H1 (cell line): ENCODE measurements at regions of chr2 and their contacts with region 1.

Region 1: DNA sequence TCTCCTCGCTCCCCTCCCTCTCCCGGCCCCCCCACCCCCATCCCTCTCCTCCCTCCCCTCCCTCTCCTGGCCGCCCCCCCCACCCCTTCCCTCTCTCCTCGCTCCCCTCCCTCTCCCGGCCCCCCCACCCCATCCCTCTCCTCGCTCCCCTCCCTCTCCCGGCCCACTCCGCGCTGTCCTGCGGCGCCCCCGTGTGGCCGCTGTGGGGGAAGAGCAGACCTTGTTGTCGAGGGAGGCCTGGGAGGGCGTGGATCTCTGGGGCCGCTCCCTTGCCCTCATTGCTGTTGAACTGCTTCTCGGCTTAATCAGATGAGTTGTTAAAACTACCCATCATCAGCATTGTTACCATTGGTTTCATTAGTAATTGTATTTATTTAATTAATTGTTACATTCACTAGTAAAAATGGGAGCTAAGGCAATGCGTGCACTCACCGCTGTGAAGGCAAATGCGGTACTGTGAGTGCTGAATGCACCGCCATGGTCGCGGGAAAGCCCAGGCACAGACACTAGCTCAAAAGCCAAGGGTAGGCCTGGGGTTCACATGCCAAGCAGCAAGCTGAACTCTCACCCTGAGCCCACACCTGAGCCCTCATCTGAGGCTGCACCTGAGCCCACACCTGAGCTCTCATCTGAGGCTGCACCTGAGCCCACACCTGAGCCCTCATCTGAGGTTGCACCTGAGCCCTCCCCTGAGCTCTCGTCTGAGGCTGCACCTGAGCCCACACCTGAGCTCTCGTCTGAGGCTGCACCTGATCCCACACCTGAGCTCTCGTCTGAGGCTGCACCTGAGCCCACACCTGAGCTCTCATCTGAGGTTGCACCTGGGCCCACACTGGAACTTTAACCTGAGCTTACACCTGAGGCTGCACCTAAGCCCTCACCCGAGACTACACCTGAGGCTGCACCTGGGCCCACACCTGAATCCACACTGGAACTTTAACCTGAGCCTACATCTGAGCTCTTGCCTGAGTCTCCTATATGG is 8.8 kb downstream of the RTP5 start:
- DNase-seq: peak; percentile 25 to 87
- H3K4me3 ChIP-seq: no peak overlapping the region
- H3K27ac ChIP-seq: no peak overlapping the region
- H3K4me1 ChIP-seq: peaks cover 3 to 8% (median 7%) of the 10 kb centered on the region in 4 experiments; a peak in 6 of 7 replicates
- H3K27me3 ChIP-seq: no peaks in the 10 kb centered on the region
- CTCF ChIP-seq: peak in 2 of 3 experiments; percentile 61 to 82; a peak in 3 of 4 replicates
- EP300 ChIP-seq: no peak
- POLR2A ChIP-seq: no peak
- RAD21 ChIP-seq: peak; percentile 76 to 84

Region 2: DNA sequence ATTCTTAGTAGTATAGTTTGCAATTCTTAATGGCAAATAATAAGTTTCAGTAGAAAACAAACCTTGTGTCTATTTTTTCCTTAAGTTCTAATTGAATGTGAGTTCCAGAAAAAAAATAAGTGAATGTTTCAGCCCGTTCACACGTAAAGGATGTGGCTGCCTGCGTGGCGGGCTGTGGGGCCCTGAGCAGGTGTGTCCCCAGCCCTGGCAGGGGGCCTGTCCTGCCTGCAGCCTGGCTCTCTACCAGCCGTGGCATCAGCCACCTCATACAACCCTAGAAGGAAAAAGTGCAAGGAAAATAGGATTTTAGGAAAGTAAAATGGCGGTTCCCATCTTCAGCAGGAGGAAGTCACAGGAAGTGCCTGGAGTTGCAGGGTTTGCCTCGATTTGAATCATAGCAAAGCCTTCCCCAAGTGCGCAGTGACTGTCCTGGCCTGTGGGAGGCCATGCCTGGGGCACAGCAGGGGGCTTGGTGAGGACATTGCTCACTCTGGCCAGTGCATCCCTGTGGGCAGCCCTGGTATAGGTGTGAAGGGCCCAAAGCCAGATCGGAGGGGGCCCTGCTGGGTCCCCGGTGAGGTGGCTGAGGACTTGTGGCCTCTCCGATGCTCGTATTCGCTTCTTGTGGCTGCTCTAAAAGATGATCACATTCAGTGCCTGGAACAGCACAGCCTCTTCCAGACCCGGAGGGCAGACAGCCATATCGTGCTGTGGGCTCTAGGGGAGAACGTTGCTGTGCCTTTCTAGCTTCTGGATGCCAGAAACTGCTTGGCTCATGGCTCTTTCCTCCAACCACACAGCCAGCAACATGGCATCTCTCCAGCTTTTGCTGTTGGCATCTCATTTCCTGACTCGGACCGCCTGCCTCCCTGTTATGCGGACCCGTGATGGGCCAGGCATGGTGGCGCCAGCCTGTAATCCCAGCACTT is 204.2 kb before region 1 on chr2:
- CTCF ChIA-PET with region 1: interaction called, 11 read pairs
- POLR2A ChIA-PET with region 1: interaction called, 3 read pairs
- DNase-seq: peak in 1 of 2 experiments; percentile 63
- H3K4me3 ChIP-seq: no peak overlapping the region
- H3K27ac ChIP-seq: 0 out of 2 replicates have a peak overlapping the region, but pooled peaks have one; percentile 14
- H3K4me1 ChIP-seq: no peaks in the 10 kb centered on the region
- H3K27me3 ChIP-seq: no peaks in the 10 kb centered on the region
- CTCF ChIP-seq: peak in 2 of 3 experiments; percentile 26 to 34; a peak in 2 of 4 replicates
- EP300 ChIP-seq: no peak
- POLR2A ChIP-seq: no peak
- RAD21 ChIP-seq: no peak

Region 3: GRCh38 chr2:241734467-241735208 is 143.6 kb before region 1 on chr2 and contains the start of gene D2HGDH:
- CTCF ChIA-PET with region 1: interaction called, 26 read pairs
- POLR2A ChIA-PET with region 1: no interaction called
- DNase-seq: peak; percentile 50 to 98
- H3K4me3 ChIP-seq: peak within 1 kb of the TSS; percentile 71 to 94 (median 78)
- H3K27ac ChIP-seq: peak within 1 kb of the TSS; percentile 20; the same call in 1 of the 2 replicates
- H3K4me1 ChIP-seq: peaks cover 0 to 6% (median 0%) of the 10 kb centered on the region in 4 experiments; a peak in 2 of 7 replicates
- H3K27me3 ChIP-seq: peaks cover 0 to 4% (median 3%) of the 10 kb centered on the region in 4 experiments; a peak in 4 of 7 replicates
- CTCF ChIP-seq: no peak
- EP300 ChIP-seq: no peak
- POLR2A ChIP-seq: peak in 1 of 2 experiments; percentile 58; a peak in 1 of 3 replicates
- RAD21 ChIP-seq: no peak
- total RNA-seq, gene D2HGDH: 8.1 and 8.3 TPM in 2 replicates

Region 4: DNA sequence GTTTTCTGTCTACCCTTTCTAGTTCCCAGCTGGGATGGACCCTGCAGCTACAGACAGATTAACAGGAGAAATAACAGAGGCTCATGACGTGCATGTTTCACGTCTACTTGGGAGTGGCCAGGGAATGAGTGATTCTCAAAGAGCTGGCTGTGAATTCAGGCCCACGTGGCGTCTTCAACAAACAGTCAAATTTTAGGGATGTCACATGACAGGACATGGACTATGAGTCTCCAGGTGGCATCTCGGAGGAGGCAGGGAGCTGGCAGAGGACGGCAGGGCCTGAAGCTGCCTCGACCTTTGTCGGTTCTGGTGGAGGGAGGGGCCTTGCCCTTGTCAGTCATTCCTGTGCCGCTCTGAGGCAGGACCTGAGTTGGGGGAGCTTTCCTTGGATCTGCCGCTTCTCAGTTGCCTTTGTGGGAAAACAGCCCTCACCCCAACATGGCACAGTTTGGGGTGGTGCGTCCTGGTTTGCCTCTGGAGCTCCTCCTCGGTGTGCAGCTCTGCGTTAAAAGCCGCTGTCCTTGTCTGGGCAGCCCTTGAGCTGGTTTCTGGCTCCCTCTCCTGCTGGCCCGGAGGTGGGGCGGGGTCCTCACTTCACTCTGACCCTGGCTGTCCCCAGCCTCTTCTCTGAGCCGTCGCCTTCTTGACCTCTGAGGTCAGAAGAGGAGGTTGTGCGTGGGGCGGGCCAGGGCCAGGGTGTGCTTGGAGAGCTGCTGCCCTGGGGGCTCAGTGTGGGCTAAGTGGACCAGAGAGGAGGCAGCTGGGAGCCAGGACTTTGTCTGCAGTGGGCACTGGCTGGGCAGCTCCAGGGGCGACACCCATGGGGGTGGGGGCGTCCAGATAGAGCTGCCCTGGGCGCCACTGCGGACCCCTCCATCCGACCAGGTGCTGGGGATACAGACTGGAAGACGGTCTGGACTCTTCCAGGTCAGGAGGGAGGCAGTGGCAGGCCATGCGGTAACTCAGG is 113.7 kb before region 1 on chr2:
- CTCF ChIA-PET with region 1: interaction called, 11 read pairs
- POLR2A ChIA-PET with region 1: no interaction called
- DNase-seq: peak in 1 of 2 experiments; percentile 57
- H3K4me3 ChIP-seq: no peak overlapping the region
- H3K27ac ChIP-seq: no peak overlapping the region
- H3K4me1 ChIP-seq: peaks cover 0 to 9% (median 2%) of the 10 kb centered on the region in 4 experiments; a peak in 3 of 7 replicates
- H3K27me3 ChIP-seq: no peaks in the 10 kb centered on the region
- CTCF ChIP-seq: peak in 1 of 3 experiments; percentile 19; a peak in 1 of 4 replicates
- EP300 ChIP-seq: no peak
- POLR2A ChIP-seq: no peak
- RAD21 ChIP-seq: peak; percentile 39 to 54; a peak in 3 of 4 replicates

Region 5: GRCh38 chr2:241810307-241811210 is 67.7 kb before region 1 on chr2:
- CTCF ChIA-PET with region 1: interaction called, 10 read pairs
- POLR2A ChIA-PET with region 1: no interaction called
- DNase-seq: peak in 1 of 2 experiments; percentile 47
- H3K4me3 ChIP-seq: no peak overlapping the region
- H3K27ac ChIP-seq: no peak overlapping the region; the same call in 1 of the 2 replicates
- H3K4me1 ChIP-seq: peaks cover 0 to 9% (median 4%) of the 10 kb centered on the region in 4 experiments; a peak in 5 of 7 replicates
- H3K27me3 ChIP-seq: no peaks in the 10 kb centered on the region; a peak in 3 of 7 replicates
- CTCF ChIP-seq: no peak
- EP300 ChIP-seq: no peak
- POLR2A ChIP-seq: no peak
- RAD21 ChIP-seq: no peak

Region 6: DNA sequence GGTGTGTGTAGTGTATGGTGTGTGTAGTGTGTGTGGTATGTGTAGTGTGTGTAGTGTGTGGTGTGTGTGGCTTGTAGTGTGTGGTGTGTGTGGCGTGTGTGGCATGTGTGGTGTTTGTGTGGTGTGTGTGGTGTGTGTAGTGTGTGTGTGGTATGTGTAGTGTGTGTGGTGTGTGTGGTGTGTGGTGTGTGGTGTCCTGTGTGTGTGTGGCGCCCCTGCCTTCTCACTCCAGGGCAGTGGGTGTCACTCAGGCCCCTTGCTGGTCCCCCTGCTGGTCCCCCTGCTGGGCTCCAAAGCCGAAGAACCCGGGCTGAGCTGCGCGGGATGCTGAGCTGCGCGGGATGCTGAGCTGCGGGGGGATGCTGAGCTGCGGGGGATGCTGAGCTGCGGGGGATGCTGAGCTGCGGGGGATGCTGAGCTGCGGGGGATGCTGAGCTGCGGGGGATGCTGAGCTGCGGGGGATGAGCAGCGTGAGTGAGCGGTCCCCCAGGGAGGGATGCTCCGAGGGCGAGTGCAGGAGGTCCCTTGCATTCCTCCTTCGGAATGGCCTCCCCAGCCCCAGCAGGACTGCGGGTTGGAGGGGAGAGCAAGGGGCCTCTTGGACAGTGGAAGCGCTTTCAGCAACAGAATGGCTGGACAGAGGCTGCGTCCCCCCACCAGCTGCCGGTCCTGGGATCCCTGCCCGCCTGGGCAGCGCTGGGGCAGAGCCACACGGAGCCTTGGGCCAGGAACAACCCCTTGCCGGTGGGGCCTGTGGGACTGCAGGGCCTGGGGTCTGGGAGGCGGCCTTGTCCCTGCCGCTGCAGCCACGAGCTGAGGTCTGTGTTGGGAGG is 12.1 kb before region 1 on chr2:
- CTCF ChIA-PET with region 1: interaction called, 16 read pairs
- POLR2A ChIA-PET with region 1: no interaction called
- DNase-seq: peak in 1 of 2 experiments; percentile 75
- H3K4me3 ChIP-seq: no peak overlapping the region
- H3K27ac ChIP-seq: no peak overlapping the region
- H3K4me1 ChIP-seq: peaks cover 0 to 11% (median 3%) of the 10 kb centered on the region in 4 experiments; a peak in 5 of 7 replicates
- H3K27me3 ChIP-seq: peaks cover 0 to 16% (median 0%) of the 10 kb centered on the region in 4 experiments; a peak in 3 of 7 replicates
- CTCF ChIP-seq: no peak
- EP300 ChIP-seq: no peak
- POLR2A ChIP-seq: no peak
- RAD21 ChIP-seq: no peak